Ascending aorta (tissue), 2 donors: ENCODE measurements at regions of chr14 and their contacts with region 1.

Region 1: DNA sequence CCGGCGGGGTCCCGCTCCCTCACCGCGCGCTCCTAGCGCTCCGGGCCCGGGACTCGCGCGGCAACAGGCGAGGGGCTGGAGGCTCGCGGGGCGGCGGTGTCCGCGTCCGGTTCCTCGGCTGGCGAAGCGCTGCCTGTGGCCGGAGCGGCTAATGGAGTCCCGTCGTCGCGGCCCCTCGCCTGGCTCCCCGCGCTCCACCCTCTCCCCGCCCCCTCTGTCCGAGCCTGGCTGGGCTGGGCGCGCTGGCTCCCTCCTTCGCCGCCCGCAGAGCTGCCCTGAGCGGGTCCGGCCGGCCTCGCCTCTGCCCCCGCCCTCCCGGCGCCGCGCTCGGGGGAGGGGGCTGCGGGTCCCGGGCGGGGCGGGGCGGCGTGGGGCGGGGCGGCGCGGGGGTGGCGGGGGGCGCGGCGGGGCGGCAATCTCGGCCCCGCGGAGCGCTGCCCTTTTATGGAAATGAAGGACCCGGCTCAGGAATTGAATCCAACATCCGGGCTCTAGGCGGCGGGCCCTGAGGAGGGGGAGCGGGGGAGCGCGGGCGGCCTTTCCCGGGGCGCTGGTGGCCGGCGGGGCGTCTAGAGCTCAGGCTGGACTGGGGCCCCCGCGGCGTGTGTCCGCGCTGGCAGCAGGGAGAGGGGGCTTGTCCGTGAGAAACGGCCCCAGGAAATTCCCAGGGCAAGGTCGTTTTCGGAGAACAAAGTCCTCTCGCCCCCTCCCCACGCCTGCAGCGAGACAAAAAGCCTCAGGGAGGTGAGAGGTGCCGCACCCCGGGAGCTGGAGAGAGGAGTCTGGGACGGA is at the start of gene FERMT2:
- DNase-seq: peak; percentile 36 to 92
- H3K4me3 ChIP-seq: peak within 1 kb of the TSS; percentile 87 to 100
- H3K27ac ChIP-seq: peak within 1 kb of the TSS; percentile 98
- H3K4me1 ChIP-seq: peaks cover 5 to 31% of the 10 kb centered on the region in 2 donors
- H3K27me3 ChIP-seq: no peaks in the 10 kb centered on the region
- CTCF ChIP-seq: peak in 1 of 3 experiments; percentile 26
- total RNA-seq, gene FERMT2: 101 TPM

Region 2: DNA sequence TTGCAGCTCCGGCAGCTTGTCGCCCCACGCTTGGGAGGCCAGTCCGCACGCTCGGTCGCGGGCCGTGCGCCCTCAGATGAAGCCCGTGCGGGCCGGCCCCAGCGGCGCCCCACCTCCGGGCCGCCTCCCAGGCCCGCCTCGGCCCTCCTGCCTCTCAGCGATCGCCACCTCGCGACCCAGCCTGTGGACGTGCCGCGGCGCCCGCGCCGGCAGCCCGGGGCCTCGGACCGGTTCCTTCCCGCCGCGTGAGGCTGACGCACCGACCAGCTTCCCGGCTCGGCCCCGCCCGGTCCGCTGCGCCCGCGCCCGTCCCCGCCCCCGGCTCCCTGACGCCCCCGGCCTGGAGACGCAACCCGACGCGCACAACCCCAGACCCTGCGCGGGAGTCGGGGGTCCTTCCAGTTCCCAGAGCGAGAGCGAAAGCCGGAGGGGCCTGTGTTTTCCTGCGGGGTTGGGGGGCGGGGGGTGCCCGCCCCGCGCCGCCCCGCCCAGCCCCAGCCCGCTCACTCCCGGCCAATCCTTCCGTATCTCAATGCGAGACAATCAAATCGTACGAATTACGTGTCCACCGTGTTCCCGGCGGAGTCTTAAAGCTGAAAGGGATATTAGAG is 255.5 kb before region 1 on chr14 and contains the start of gene ERO1A:
- intact Hi-C with region 1: loop called (anchors 5 kb)
- DNase-seq: peak; percentile 44 to 91
- H3K4me3 ChIP-seq: peak within 1 kb of the TSS; percentile 96 to 98
- H3K27ac ChIP-seq: peak within 1 kb of the TSS; percentile 97 to 99
- H3K4me1 ChIP-seq: peaks cover 3 to 4% of the 10 kb centered on the region in 2 donors
- H3K27me3 ChIP-seq: no peaks in the 10 kb centered on the region
- CTCF ChIP-seq: no peak
- total RNA-seq, gene ERO1A: 25.9 TPM

Region 3: DNA sequence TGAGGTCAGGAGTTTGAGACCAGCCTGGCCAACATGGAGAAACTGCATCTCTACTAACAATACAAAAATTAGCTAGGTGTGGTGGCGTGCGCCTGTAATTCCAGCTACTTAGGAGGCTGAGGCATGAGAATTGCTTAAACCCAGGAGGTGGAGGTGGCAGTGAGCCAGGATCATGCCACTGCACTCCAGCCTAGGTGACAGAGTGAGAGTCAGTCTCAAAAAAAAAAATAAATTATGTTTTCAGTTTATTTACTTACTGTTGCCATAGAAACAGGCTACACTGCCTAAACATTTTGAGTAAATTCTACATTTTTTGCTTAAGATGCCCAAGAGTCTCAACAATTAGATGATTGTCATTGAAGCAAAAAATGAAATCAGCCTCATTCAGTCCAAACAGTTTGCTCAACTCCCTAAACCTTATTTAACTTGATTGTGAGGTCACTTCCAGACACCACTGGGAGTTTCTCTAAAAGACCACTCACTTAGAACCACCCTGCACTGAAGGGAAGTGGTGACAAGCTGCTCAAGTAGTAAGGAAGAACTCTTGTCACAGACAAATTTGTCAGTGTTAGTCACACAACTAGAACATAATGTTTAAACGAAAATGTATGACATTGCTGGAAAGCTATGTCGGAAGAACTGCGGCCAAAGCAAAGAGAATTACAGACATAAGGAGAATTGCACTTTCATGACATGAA is 149.9 kb before region 1 on chr14:
- intact Hi-C with region 1: loop called (anchors 2 kb)
- DNase-seq: peak; percentile 32 to 89
- H3K4me3 ChIP-seq: peak overlapping the region in 1 of 2 donors; percentile 4
- H3K27ac ChIP-seq: peak overlapping the region; percentile 89 to 95
- H3K4me1 ChIP-seq: peaks cover 3 to 17% of the 10 kb centered on the region in 2 donors
- H3K27me3 ChIP-seq: no peaks in the 10 kb centered on the region
- CTCF ChIP-seq: no peak

Region 4: DNA sequence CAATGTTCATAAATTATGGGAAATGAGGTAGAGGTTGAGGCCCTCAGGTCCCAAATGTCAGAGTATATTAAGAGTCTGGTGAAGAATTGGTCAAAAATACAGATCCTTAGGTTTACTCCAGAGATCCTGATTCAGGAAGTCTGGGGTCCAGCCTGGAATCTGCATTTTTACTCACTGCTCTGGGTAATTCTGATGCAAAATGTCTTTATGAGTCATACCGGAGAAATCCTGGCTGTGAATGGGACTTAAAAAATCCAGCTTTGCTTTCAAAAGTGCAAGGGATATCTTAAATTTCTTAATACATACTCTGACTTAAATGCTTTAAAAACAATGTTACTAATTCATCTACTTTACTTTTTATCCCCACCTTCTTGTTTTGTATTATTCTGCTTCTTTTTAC is 74.8 kb before region 1 on chr14:
- intact Hi-C with region 1: loop called (anchors 2 kb)
- DNase-seq: no peak
- H3K4me3 ChIP-seq: no peak overlapping the region
- H3K27ac ChIP-seq: peak overlapping the region; percentile 52 to 72
- H3K4me1 ChIP-seq: peaks cover 0 to 38% of the 10 kb centered on the region in 2 donors
- H3K27me3 ChIP-seq: no peaks in the 10 kb centered on the region
- CTCF ChIP-seq: no peak

Region 5: DNA sequence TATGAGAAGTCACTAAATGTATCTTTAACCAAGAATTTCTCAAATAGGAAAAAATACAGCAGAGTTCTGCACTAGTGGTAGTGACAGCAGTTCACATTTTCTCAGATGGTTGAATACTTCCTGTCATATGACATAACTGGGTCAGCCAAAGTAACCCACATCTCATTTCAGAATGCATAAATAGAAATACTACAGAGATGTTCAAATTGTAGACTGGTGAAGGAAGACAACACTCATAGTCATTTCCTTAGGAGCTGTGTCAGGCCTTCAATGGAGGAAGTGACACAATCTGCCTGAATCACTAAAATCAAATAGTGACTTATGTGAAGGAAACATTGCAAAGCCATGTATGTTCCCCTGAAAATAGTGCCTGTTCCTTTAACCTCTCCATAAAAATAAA is 32.6 kb before region 1 on chr14:
- intact Hi-C with region 1: loop called (anchors 5 kb)
- DNase-seq: no peak
- H3K4me3 ChIP-seq: no peak overlapping the region
- H3K27ac ChIP-seq: peak overlapping the region; percentile 82 to 87
- H3K4me1 ChIP-seq: peaks cover 14 to 62% of the 10 kb centered on the region in 2 donors
- H3K27me3 ChIP-seq: no peaks in the 10 kb centered on the region
- CTCF ChIP-seq: no peak

Region 6: GRCh38 chr14:52923902-52924575 is 27.1 kb before region 1 on chr14:
- intact Hi-C with region 1: loop called (anchors 2 kb)
- DNase-seq: no peak
- H3K4me3 ChIP-seq: peak overlapping the region in 1 of 2 donors; percentile 5
- H3K27ac ChIP-seq: peak overlapping the region; percentile 82 to 87
- H3K4me1 ChIP-seq: peaks cover 12 to 76% of the 10 kb centered on the region in 2 donors
- H3K27me3 ChIP-seq: no peaks in the 10 kb centered on the region
- CTCF ChIP-seq: peak in 1 of 3 experiments; percentile 4

Region 7: DNA sequence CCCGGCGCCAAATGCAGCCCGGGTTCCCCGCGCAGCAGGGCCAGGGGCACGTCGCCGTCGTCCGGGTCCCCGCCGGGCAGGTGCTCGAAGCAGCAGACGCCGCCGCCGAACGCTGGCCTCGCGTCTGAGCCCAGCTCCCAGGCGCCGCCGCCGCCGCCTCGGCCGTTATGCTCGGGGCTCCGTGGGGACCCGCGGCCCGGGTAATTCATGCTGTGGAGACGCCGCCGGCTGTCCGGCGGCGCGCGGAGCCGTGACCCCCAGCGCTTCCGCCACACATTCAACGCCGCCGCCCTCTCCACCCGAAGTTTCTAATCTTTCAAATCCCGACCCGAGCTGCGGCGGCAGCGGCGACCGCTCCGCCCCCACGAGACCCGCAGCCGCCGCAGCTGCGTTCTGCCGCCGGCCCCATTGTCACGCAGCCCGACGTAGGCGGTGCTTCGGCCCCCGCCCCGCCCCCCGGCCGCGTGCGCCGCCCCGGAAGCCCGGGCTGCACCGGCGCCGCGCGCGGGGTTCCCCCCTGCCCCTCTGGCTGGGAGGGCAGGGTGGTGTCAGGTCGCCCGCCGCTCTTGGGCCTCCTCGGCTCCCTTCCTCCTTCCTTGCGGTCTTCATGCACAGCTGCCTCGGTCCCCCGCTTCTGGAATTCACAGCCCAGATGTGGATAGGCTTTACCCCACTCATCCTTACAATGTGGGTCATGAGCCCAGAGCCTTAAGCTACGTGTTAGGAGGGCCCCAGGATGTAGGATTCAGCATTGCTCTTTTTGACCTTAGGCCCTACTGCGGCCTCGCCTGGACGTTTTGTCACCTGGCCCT is 202.0 kb after region 1 on chr14 and contains the start of gene DDHD1:
- intact Hi-C with region 1: loop called (anchors 5 kb)
- DNase-seq: peak; percentile 27 to 87
- H3K4me3 ChIP-seq: peak within 1 kb of the TSS; percentile 71 to 96
- H3K27ac ChIP-seq: peak within 1 kb of the TSS; percentile 87 to 96
- H3K4me1 ChIP-seq: peaks cover 0 to 11% of the 10 kb centered on the region in 2 donors
- H3K27me3 ChIP-seq: no peaks in the 10 kb centered on the region
- CTCF ChIP-seq: no peak
- total RNA-seq, gene DDHD1: 21.3 TPM